IMR-90 (cell line): ENCODE measurements at regions of chr9 and their contacts with region 1.

Region 1: GRCh38 chr9:128610897-128611296 is 45.8 kb downstream of the DYNC2I2 start:
- DNase-seq: no peak
- ATAC-seq: no peak
- H3K4me3 ChIP-seq: no peak overlapping the region
- H3K27ac ChIP-seq: no peak overlapping the region
- H3K4me1 ChIP-seq: no peaks in the 10 kb centered on the region
- H3K27me3 ChIP-seq: no peaks in the 10 kb centered on the region
- CTCF ChIP-seq: no peak
- POLR2A ChIP-seq: no peak
- RAD21 ChIP-seq: no peak

Region 2: DNA sequence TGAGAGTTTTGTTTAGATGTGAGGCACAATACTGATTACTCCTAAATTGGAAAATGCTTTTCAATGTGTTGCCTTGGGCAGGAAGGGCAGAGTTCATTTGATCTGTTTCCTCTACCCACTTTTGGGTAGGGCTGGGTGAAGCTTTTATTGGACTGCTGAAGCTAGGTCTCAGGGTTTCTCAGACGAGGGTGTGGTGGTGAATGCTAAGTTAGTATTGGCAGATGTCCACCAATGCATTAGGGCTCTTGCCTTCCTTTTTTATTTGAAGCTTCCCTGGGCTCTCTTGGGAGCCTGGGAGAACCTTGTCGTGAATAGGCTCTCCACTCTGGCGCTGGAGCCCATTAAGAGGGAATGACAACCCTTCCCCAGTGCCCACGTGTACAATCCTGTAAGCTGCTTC is 35.4 kb before region 1 on chr9:
- CTCF ChIA-PET with region 1: no interaction called
- POLR2A ChIA-PET with region 1: no interaction called
- dilution Hi-C with region 1: no loop called
- in situ Hi-C with region 1: no loop called
- intact Hi-C with region 1: loop called (anchors 5 kb)
- DNase-seq: no peak
- ATAC-seq: no peak
- H3K4me3 ChIP-seq: no peak overlapping the region
- H3K27ac ChIP-seq: no peak overlapping the region
- H3K4me1 ChIP-seq: no peaks in the 10 kb centered on the region
- H3K27me3 ChIP-seq: no peaks in the 10 kb centered on the region
- CTCF ChIP-seq: no peak
- POLR2A ChIP-seq: no peak
- RAD21 ChIP-seq: no peak